Sigmoid colon (tissue), 7 donors: ENCODE measurements at regions of chr1 and their contacts with region 1.

Region 1: GRCh38 chr1:110619412-110620249 is 13.5 kb upstream of the KCNA2 start:
- DNase-seq: peak; percentile 83
- H3K4me3 ChIP-seq: no peak overlapping the region
- H3K27ac ChIP-seq: no peak overlapping the region
- H3K4me1 ChIP-seq: peaks cover 0 to 10% (median 4%) of the 10 kb centered on the region in 4 donors
- H3K27me3 ChIP-seq: peaks cover 3 to 51% (median 32%) of the 10 kb centered on the region in 3 donors
- CTCF ChIP-seq: peak; percentile 63 to 83 (median 70)
- EP300 ChIP-seq: no peak
- POLR2A ChIP-seq: no peak

Region 2: DNA sequence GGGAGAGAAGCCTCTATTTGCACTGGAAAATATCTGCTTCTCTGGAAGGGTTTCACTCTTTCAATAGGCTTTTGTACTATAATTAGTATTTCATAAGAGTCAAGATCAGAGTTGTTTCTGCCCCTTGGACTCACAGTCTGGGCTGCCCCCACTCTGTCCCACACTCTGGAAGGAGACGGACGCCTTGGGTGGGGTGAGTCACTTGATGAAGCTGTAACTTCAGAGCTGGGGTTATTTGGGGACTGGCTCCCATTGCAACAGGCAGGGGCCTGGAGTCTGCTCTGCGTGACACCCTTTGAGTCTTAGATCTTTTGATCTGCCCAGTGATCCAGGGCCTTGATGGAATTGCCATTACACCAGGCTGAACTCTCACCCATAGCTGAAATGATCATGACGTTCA is 96.6 kb before region 1 on chr1:
- intact Hi-C with region 1: loop called (anchors 1 kb)
- DNase-seq: peak; percentile 70
- H3K4me3 ChIP-seq: no peak overlapping the region
- H3K27ac ChIP-seq: peak overlapping the region in 2 of 4 donors; percentile 23 to 31
- H3K4me1 ChIP-seq: peaks cover 0 to 5% (median 3%) of the 10 kb centered on the region in 4 donors
- H3K27me3 ChIP-seq: peaks cover 0 to 25% (median 17%) of the 10 kb centered on the region in 3 donors
- CTCF ChIP-seq: no peak
- EP300 ChIP-seq: no peak
- POLR2A ChIP-seq: no peak

Region 3: DNA sequence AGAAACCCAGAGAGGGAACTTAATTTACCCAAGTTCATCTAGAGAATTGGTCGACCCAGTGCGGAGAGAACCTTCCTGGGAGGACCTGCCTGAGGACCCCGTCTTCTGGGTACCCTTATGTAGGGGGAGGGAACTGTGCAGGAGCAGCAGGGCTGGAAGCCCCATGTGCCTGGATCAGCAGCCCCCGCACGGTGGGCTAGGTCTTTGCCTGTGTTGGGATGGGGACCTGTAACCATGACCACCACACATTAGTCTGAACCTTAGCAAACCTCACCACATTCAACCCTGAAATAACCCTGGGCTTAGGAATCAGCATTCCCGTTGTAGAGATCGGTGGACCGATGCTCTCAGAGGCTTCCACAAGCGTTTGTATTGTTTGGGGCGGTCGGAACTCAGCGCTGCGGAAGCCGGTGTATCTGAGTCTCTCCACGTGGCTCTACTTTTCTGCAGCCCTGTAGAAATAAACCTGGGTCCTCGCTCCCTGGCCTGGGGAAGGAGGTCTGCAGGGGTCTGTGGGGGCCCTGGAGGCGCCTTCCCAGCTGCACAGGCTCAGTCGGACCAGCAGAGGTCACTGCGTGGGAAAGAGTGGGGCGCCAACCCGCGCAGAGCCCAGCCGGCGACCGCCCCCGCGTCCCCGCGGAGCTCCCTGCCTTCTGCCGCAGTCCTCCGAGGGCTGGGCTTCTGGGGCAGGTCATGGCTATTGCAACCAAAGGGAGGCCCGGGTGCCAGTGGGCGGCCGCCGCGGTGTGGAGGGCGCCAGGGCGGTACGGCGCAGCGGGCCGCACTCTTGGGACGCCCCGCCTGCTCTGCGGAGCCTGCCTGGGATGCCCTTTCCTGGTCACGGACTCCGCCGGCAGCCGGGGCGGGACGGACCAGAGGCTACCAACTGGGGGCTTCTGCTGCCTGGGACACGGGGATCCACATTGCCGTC is 64.5 kb before region 1 on chr1:
- intact Hi-C with region 1: loop called (anchors 1 kb)
- DNase-seq: no peak
- H3K4me3 ChIP-seq: peak overlapping the region; percentile 21 to 52 (median 41)
- H3K27ac ChIP-seq: peak overlapping the region; percentile 38 to 60 (median 52)
- H3K4me1 ChIP-seq: peaks cover 0 to 15% (median 14%) of the 10 kb centered on the region in 4 donors
- H3K27me3 ChIP-seq: peaks cover 0 to 45% (median 16%) of the 10 kb centered on the region in 3 donors
- CTCF ChIP-seq: peak; percentile 30 to 79 (median 57)
- EP300 ChIP-seq: no peak
- POLR2A ChIP-seq: no peak

Region 4: GRCh38 chr1:110565565-110565964 is 54.1 kb before region 1 on chr1:
- intact Hi-C with region 1: no loop called
- DNase-seq: no peak
- H3K4me3 ChIP-seq: no peak overlapping the region
- H3K27ac ChIP-seq: peak overlapping the region in 1 of 4 donors; percentile 17
- H3K4me1 ChIP-seq: no peaks in the 10 kb centered on the region
- H3K27me3 ChIP-seq: peaks cover 0 to 7% (median 0%) of the 10 kb centered on the region in 3 donors
- CTCF ChIP-seq: no peak
- EP300 ChIP-seq: no peak
- POLR2A ChIP-seq: no peak

Region 5: DNA sequence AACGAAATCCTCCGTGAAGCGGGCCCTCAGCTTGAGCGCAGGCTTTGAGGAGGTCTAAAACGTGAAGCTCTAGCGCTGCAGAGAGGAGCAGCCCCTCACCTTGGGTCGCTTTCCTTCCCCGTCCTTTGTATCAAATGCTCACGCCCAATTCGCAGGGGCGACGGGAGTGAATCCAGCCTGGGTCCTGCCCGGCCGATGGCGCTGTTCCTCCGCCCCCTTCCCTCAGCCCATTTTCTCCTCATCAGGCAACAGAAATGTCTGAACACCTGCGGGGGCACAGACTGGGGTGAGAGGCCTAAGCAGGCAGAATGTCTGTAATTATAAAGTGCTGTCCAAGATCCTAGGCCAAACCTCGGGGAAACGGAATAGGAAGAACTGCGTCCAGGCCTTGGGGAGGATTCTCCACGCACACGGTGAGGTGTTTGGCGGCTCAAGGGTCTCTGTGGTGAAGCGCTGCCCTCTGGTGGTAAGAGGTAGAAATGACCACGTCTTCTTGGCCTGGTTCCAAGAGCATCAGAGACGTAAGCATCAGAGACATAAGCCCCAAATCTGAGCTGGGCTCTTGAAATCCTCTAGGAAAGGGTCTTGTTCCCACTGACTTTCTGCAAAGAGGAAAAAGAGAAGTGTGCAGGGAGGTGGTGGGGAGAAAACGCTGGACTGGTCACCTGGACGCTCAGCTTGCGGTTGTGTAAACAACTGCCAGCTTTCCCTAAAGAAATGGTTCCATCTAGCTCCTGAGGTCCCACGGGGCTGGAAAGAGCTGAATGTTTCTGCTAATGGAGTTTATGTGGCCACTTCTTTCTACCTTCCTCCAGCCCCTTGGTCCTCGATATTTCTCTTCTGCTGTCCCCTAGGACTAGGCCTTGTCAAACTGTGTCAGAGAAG is 161.2 kb after region 1 on chr1:
- intact Hi-C with region 1: loop called (anchors 5 kb)
- DNase-seq: peak; percentile 80
- H3K4me3 ChIP-seq: no peak overlapping the region
- H3K27ac ChIP-seq: no peak overlapping the region
- H3K4me1 ChIP-seq: no peaks in the 10 kb centered on the region
- H3K27me3 ChIP-seq: peaks cover 0 to 21% (median 13%) of the 10 kb centered on the region in 3 donors
- CTCF ChIP-seq: peak; percentile 28 to 75 (median 59)
- EP300 ChIP-seq: no peak
- POLR2A ChIP-seq: no peak